ENCODE measurements at regions of chr14 and their contacts with region 1.

Region 1: GRCh38 chr14:58244556-58245387 is at the start of gene PSMA3:
- DNase-seq: peak; percentile 89 to 95 (median 92)
- ATAC-seq: peak; percentile 92
- H3K4me3 ChIP-seq: peak within 1 kb of the TSS; percentile 66
- H3K27ac ChIP-seq: peak within 1 kb of the TSS; percentile 93
- H3K4me1 ChIP-seq: peaks cover 0 to 11% of the 10 kb centered on the region in 2 experiments; a peak in 2 of 5 replicates
- H3K27me3 ChIP-seq: no peaks in the 10 kb centered on the region
- CTCF ChIP-seq: no peak
- EP300 ChIP-seq: no peak
- POLR2A ChIP-seq: peak; percentile 89
- RAD21 ChIP-seq: no peak
- polyA plus RNA-seq, gene PSMA3: 667 to 786 TPM

Region 2: DNA sequence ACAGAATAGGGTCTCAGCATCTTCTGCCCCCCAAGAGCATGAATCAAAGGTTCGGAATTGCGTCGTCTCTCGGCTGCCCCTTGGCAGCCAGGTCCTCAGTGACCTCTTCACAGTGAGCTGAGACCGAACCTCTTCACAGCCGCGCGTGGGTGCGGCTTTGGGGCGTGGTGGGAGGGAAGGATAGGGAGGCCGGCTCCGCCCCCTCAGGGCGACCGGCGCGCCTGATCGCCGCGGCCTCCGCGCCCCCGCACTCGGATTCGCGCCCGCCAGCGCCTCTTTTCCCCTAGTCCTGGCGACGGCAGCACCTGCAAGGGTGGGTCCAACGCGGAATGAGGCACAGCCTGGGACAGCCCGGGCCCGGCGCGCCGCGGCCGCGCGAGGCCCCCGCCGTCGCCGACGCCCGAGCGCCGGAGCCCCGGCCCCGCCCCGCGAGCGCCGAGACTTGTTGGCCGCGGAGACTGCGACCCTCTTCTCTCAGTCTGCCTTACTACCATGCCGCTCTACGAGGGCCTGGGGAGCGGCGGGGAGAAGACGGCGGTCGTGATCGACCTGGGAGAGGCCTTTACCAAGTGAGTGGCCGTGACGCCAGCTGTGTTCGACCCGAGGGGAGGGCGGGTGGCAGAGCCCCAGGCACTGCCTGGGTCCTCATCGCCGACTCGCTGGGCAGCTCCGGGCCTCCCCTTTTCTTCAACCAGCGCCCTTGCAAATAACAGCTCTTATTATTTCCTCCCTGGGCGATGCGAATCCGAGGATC is 44.9 kb before region 1 on chr14 and contains the start of gene ACTR10:
- CTCF ChIA-PET with region 1: no interaction called
- POLR2A ChIA-PET with region 1: interaction called, 3 read pairs
- in situ Hi-C with region 1: no loop called
- intact Hi-C with region 1: loop called (anchors 2 kb)
- DNase-seq: peak; percentile 84 to 93 (median 85)
- ATAC-seq: peak; percentile 95
- H3K4me3 ChIP-seq: peak within 1 kb of the TSS; percentile 69
- H3K27ac ChIP-seq: peak within 1 kb of the TSS; percentile 79
- H3K4me1 ChIP-seq: peaks cover 0 to 10% of the 10 kb centered on the region in 2 experiments; a peak in 3 of 5 replicates
- H3K27me3 ChIP-seq: no peaks in the 10 kb centered on the region
- CTCF ChIP-seq: no peak
- EP300 ChIP-seq: no peak
- POLR2A ChIP-seq: peak; percentile 71; the same call in 1 of the 2 replicates
- RAD21 ChIP-seq: no peak
- polyA plus RNA-seq, gene ACTR10: 28.6 to 38.1 TPM

Region 3: GRCh38 chr14:58258156-58258555 is 13.4 kb after region 1 on chr14:
- CTCF ChIA-PET with region 1: no interaction called
- POLR2A ChIA-PET with region 1: interaction called, 11 read pairs
- in situ Hi-C with region 1: no loop called
- intact Hi-C with region 1: no loop called
- DNase-seq: no peak
- ATAC-seq: peak; percentile 59; the same call in 2 of the 3 replicates
- H3K4me3 ChIP-seq: no peak overlapping the region
- H3K27ac ChIP-seq: no peak overlapping the region
- H3K4me1 ChIP-seq: no peaks in the 10 kb centered on the region
- H3K27me3 ChIP-seq: no peaks in the 10 kb centered on the region
- CTCF ChIP-seq: no peak
- EP300 ChIP-seq: no peak
- POLR2A ChIP-seq: no peak
- RAD21 ChIP-seq: no peak

Region 4: GRCh38 chr14:58427281-58428117 is 182.7 kb after region 1 on chr14 and contains the starts of genes KIAA0586 and TIMM9:
- CTCF ChIA-PET with region 1: no interaction called
- POLR2A ChIA-PET with region 1: no interaction called
- in situ Hi-C with region 1: no loop called
- intact Hi-C with region 1: loop called (anchors 2 kb)
- DNase-seq: peak; percentile 84 to 97 (median 89)
- ATAC-seq: peak; percentile 93
- H3K4me3 ChIP-seq: peak within 1 kb of the TSS; percentile 70
- H3K27ac ChIP-seq: peak within 1 kb of the TSS; percentile 100
- H3K4me1 ChIP-seq: peaks cover 3 to 7% of the 10 kb centered on the region in 2 experiments; a peak in 4 of 5 replicates
- H3K27me3 ChIP-seq: no peaks in the 10 kb centered on the region
- CTCF ChIP-seq: no peak
- EP300 ChIP-seq: peak; percentile 96
- POLR2A ChIP-seq: peak; percentile 77
- RAD21 ChIP-seq: no peak
- polyA plus RNA-seq, gene KIAA0586: 11.2 to 14.7 TPM
- polyA plus RNA-seq, gene TIMM9: 84.3 to 89.4 TPM

Measured in K562 (cell line).